HEK293 (cell line): ENCODE measurements at regions of chr17 and their contacts with region 1.

Region 1: GRCh38 chr17:14886240-14886639 is 378.9 kb downstream of the PMP22 start:
- H3K4me3 ChIP-seq: no peak overlapping the region
- H3K27ac ChIP-seq: no peak overlapping the region
- H3K4me1 ChIP-seq: no peaks in the 10 kb centered on the region
- CTCF ChIP-seq: no peak

Region 2: DNA sequence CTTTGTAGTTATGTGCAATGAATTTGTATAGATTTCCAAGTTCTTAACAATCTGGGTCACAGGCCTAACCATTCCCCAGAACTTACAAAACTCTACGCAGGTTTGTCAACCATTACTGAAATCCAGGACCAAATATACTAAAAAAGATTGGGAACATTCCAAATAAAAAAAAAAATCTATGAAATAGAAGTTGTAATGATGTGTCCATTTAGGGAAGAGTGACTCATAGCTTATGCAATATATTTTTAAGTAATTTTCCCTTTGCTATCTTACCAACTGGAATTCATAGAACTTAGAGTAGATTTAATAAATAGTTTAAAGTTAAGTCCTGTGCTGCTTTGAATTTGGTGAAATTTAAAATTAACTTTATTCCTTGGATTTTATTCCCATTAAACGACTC is 14.3 kb before region 1 on chr17:
- CTCF ChIA-PET with region 1: interaction called, 16 read pairs
- POLR2A ChIA-PET with region 1: no interaction called
- H3K4me3 ChIP-seq: no peak overlapping the region
- H3K27ac ChIP-seq: no peak overlapping the region
- H3K4me1 ChIP-seq: no peaks in the 10 kb centered on the region
- CTCF ChIP-seq: no peak